ENCODE measurements at regions of chr9 and their contacts with region 1.

Region 1: GRCh38 chr9:17318821-17319320 is 184.0 kb downstream of the CNTLN start:
- DNase-seq: no peak
- ATAC-seq: no peak
- H3K4me3 ChIP-seq: no peak overlapping the region
- H3K4me3 Mint-ChIP-seq: no peak overlapping the region
- H3K27ac ChIP-seq: no peak overlapping the region
- H3K27ac Mint-ChIP-seq: no peak overlapping the region
- H3K4me1 ChIP-seq: no peaks in the 10 kb centered on the region
- H3K4me1 Mint-ChIP-seq: no peaks in the 10 kb centered on the region
- H3K27me3 ChIP-seq: no peaks in the 10 kb centered on the region
- H3K27me3 Mint-ChIP-seq: no peaks in the 10 kb centered on the region
- CTCF ChIP-seq: no peak

Region 2: DNA sequence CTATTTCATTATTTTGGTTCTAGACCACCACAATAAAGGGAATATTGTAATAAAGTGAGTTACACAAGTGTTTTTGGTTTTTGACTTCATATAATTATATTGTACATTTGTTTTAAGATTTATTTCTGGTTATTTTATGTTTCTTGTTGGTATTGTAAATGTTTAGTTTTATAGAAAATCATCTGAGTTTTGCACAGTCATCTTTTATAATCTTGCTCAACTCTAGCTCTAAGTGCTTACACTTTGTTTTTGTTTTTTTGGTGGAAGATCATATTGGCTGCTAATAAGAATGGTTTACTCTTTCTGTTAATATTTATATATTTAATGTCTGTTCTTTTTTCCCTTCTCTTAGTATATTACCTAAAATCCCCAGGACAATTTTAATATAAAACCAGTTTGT is 49.1 kb before region 1 on chr9:
- CTCF ChIA-PET with region 1: no interaction called
- POLR2A ChIA-PET with region 1: no interaction called
- intact Hi-C with region 1: loop called in 1 of 2 experiments (anchors 5 kb)
- DNase-seq: no peak
- ATAC-seq: no peak
- H3K4me3 ChIP-seq: no peak overlapping the region
- H3K4me3 Mint-ChIP-seq: no peak overlapping the region
- H3K27ac ChIP-seq: no peak overlapping the region
- H3K27ac Mint-ChIP-seq: no peak overlapping the region
- H3K4me1 ChIP-seq: no peaks in the 10 kb centered on the region
- H3K4me1 Mint-ChIP-seq: no peaks in the 10 kb centered on the region
- H3K27me3 ChIP-seq: no peaks in the 10 kb centered on the region
- H3K27me3 Mint-ChIP-seq: no peaks in the 10 kb centered on the region
- CTCF ChIP-seq: no peak